ENCODE measurements at regions of chr7 and their contacts with region 1.

Region 1: GRCh38 chr7:128322040-128322643 is 21.6 kb downstream of the RBM28 start:
- DNase-seq: no peak
- H3K4me3 ChIP-seq: no peak overlapping the region
- H3K27ac ChIP-seq: no peak overlapping the region
- H3K4me1 ChIP-seq: no peaks in the 10 kb centered on the region
- H3K27me3 ChIP-seq: no peaks in the 10 kb centered on the region
- CTCF ChIP-seq: peak in 2 of 4 experiments; percentile 46 to 51
- POLR2A ChIP-seq: no peak

Region 2: DNA sequence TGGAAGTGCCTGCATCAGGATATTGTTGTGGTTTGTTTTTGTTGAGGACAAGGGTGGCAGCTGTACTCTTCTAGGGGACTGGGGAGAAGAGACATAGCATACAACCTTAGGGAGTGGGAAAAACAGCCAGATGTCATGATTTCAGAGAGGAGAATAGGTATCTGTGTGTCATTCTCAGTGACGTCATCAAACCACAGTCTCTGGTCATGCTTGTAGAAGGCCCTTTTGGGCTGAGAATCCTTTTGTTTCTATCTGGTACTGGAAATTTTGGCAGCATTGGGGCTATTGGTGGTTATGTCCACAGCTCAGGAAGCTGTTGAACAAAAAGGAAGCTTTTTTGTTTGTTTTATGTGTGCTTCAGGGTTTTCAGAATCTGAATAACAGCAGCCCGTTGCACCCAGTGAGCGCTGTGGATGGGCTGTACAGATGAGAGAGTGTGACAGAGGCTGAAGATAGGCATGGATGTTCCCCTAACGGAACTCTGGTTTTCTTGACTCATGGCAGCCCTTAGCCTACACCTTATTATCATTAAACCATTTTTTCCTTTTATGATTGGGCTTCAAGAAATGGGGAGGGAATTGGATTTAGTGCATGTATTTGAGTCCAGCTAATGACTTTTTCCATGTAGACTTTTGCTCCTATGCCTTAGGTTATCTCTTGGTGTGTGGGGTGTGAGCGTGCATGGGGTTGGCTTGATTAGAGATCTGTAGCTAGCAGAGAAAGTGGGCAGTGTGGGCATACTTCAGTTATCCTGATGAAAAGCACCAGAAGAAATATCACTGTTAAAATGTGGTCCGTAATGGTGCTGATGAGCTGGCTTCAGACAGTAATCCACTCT is 604.4 kb before region 1 on chr7:
- intact Hi-C with region 1: loop called (anchors 10 kb)
- DNase-seq: no peak
- H3K4me3 ChIP-seq: no peak overlapping the region
- H3K27ac ChIP-seq: no peak overlapping the region
- H3K4me1 ChIP-seq: no peaks in the 10 kb centered on the region
- H3K27me3 ChIP-seq: no peaks in the 10 kb centered on the region
- CTCF ChIP-seq: no peak
- POLR2A ChIP-seq: no peak

Region 3: DNA sequence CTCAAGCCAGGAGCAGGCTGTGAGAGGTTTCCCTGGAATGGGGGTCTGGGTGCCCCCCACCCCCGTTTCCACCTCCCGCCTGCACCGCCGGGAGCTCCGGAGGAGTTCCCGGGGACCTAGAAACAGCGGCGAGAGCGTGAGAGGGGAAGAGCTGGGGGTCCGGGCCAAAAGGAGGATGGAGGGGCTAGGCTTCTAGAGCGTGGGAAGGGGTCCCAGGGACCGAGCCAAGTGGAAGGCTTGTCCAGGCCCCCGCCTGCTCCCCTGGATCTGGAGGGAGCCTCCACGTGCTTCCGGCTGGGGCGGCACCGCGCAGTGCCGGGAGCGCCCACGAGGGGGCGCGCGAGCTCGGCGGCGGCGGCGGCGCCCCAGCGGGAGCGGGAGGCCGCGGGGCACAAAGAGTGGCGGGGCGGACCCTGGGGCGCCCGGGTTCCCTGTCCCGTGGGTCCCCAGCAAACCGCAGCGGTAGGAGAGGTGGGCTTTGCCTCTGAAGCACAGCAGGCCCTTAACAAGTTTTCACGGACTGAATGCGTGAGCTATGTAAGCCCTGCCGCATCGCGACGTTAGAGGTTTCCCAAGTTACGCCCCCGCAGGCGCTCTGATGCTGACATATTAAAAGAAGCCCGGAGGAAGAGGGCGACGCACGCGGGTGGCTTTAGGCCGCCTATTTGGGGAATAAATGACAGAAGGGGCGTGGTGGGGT is 186.5 kb before region 1 on chr7:
- intact Hi-C with region 1: loop called (anchors 5 kb)
- DNase-seq: peak; percentile 13
- H3K4me3 ChIP-seq: peak overlapping the region; percentile 31 to 39
- H3K27ac ChIP-seq: no peak overlapping the region
- H3K4me1 ChIP-seq: peaks cover 3% of the 10 kb centered on the region
- H3K27me3 ChIP-seq: peaks cover 3% of the 10 kb centered on the region
- CTCF ChIP-seq: peak; percentile 80 to 94 (median 87)
- POLR2A ChIP-seq: no peak

Region 4: GRCh38 chr7:128697302-128697905 is 375.3 kb after region 1 on chr7:
- intact Hi-C with region 1: no loop called
- DNase-seq: no peak
- H3K4me3 ChIP-seq: peak overlapping the region in 1 of 2 donors; percentile 16
- H3K27ac ChIP-seq: no peak overlapping the region
- H3K4me1 ChIP-seq: no peaks in the 10 kb centered on the region
- H3K27me3 ChIP-seq: no peaks in the 10 kb centered on the region
- CTCF ChIP-seq: no peak
- POLR2A ChIP-seq: no peak

Measured in prostate gland (tissue), 2 donors.